ENCODE measurements at regions of chr3 and their contacts with region 1.

Region 1: DNA sequence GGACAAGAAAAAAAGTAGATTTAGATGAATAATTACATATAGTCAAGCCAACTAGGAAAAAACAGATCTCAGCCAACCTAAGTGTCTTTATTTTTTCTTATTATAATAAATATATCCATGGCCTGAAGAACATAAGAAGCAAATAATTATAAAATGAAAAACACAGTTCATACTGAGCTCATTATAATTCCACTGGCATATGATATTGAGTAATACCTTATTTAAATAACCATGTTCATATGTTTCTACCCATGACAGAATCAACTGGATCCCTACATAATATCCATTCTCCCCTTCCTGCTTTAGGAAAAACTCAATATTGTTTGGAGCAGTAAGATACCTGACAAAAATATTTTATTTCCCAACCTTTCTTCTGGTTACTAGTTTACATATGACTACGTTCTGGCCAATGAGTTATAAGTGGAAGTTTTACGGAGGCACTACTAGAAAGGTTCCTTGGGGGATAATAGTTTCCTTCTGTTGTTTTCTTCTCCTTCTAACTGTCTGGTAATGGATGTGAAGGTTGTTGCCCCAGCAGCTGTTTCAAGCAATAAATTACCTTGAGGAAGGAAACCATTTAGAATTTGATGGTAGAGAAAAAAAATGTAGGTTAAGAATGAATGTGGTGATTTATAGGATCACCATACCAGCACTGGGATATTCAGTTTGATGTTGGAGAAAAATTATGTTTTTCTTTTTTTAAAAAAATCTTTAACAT is 184.1 kb upstream of the MBNL1 start:
- DNase-seq: no peak
- ATAC-seq: no peak
- H3K4me3 ChIP-seq: no peak overlapping the region
- H3K27ac ChIP-seq: no peak overlapping the region
- H3K4me1 ChIP-seq: peaks cover 0 to 3% of the 10 kb centered on the region in 2 donors
- H3K27me3 ChIP-seq: no peaks in the 10 kb centered on the region

Region 2: GRCh38 chr3:152121292-152121654 is 36.7 kb after region 1 on chr3:
- intact Hi-C with region 1: loop called (anchors 5 kb)
- DNase-seq: no peak
- ATAC-seq: peak; percentile 56
- H3K4me3 ChIP-seq: no peak overlapping the region
- H3K27ac ChIP-seq: peak overlapping the region in 1 of 2 donors; percentile 90
- H3K4me1 ChIP-seq: peaks cover 3 to 4% of the 10 kb centered on the region in 2 donors
- H3K27me3 ChIP-seq: no peaks in the 10 kb centered on the region